Heart right ventricle (tissue), 16 donors: ENCODE measurements at regions of chr20 and their contacts with region 1.

Region 1: GRCh38 chr20:22691369-22692118 is 107.2 kb upstream of the FOXA2 start:
- DNase-seq: peak; percentile 79 to 82
- ATAC-seq: peak; percentile 89 to 96 (median 94)
- H3K4me3 ChIP-seq: peak overlapping the region in 5 of 10 donors; percentile 11 to 33 (median 24)
- H3K27ac ChIP-seq: peak overlapping the region in 9 of 10 donors; percentile 8 to 80 (median 43)
- H3K4me1 ChIP-seq: peaks cover 0 to 32% (median 16%) of the 10 kb centered on the region in 9 donors
- H3K27me3 ChIP-seq: no peaks in the 10 kb centered on the region
- CTCF ChIP-seq: peak; percentile 85 to 95 (median 94)

Region 2: DNA sequence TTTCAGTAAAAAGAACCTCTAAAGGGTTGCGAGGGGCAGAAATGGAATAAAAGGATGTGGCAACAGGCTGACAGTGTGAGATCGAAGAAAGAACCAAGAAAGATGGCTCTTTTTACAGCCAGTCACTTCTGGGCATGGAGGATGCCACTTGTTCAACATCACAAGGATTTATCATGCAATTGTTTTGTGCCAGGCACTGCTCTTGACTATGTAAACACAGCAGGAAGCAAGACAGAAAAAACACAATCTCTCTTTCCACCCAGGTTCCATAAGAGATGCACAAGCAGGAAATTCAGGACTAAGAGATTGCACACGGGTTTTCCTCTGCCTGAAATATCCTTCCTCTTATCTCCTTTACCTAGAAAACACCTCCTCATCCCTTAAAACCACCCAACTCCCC is 145.2 kb before region 1 on chr20:
- intact Hi-C with region 1: no loop called
- DNase-seq: no peak
- ATAC-seq: no peak
- H3K4me3 ChIP-seq: no peak overlapping the region
- H3K27ac ChIP-seq: no peak overlapping the region
- H3K4me1 ChIP-seq: no peaks in the 10 kb centered on the region
- H3K27me3 ChIP-seq: peaks cover 0 to 72% (median 41%) of the 10 kb centered on the region in 7 donors
- CTCF ChIP-seq: no peak

Region 3: DNA sequence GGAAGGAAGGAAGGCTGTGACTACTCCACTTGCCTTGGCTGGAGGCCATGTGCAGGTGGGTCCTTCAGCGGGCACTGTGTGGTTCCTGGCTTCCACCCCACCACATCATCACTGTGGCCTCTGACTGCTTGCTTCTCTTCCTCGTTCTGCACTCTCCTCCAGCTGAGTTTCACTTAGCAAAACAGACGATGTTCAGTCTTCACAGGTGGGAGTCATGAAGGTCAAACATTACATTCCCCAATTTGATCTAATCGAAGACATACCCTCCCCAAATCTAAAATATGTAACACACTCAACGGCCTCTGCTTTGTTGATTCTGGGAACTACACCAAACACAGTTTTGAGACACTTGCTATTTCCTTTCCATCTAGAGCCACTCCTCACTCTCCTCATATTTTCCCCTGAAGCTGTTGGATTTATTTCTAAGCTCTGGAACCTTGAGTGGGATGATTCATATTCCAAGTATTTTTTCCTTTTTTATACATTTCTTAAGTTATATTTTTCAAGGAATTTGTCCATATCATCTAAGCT is 25.3 kb after region 1 on chr20:
- intact Hi-C with region 1: loop called in 1 of 10 experiments (anchors 2 kb)
- DNase-seq: no peak
- ATAC-seq: no peak
- H3K4me3 ChIP-seq: no peak overlapping the region
- H3K27ac ChIP-seq: peak overlapping the region in 8 of 10 donors; percentile 6 to 75 (median 58)
- H3K4me1 ChIP-seq: peaks cover 5 to 48% (median 37%) of the 10 kb centered on the region in 9 donors
- H3K27me3 ChIP-seq: no peaks in the 10 kb centered on the region
- CTCF ChIP-seq: no peak

Region 4: DNA sequence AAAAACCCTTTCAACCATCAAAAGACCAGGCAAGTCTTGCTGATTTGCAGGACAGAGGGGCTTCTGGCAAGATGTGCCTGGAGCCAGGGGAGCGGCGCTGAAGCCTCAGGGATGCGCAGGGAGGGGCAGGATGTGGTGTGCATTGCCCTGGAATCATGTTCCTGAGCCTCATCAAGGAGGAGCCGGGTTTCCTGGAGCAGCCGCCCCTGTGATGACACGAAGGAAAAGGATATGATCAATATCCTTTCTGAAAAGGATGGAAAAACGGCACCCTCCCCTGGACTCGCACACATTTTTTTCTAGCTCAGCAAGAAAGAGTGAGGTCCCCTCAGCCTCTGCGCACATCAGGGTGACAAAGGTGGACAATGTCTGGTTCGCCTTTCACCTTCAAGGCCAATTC is 170.4 kb after region 1 on chr20:
- intact Hi-C with region 1: loop called in 3 of 10 experiments (anchors 5 to 10 kb)
- DNase-seq: peak; percentile 43 to 68
- ATAC-seq: peak; percentile 75 to 93 (median 84)
- H3K4me3 ChIP-seq: no peak overlapping the region
- H3K27ac ChIP-seq: peak overlapping the region in 9 of 10 donors; percentile 39 to 85 (median 71)
- H3K4me1 ChIP-seq: peaks cover 0 to 35% (median 5%) of the 10 kb centered on the region in 9 donors
- H3K27me3 ChIP-seq: peaks cover 0 to 6% (median 0%) of the 10 kb centered on the region in 7 donors
- CTCF ChIP-seq: no peak

Region 5: GRCh38 chr20:23043376-23043775 is 351.8 kb after region 1 on chr20:
- intact Hi-C with region 1: loop called in 8 of 10 experiments (anchors 5 to 10 kb)
- DNase-seq: no peak
- ATAC-seq: no peak
- H3K4me3 ChIP-seq: no peak overlapping the region
- H3K27ac ChIP-seq: no peak overlapping the region
- H3K4me1 ChIP-seq: peaks cover 0 to 40% (median 34%) of the 10 kb centered on the region in 9 donors
- H3K27me3 ChIP-seq: peaks cover 0 to 66% (median 34%) of the 10 kb centered on the region in 7 donors
- CTCF ChIP-seq: no peak

Region 6: GRCh38 chr20:23245553-23246181 is 554.1 kb after region 1 on chr20:
- intact Hi-C with region 1: loop called in 2 of 10 experiments (anchors 5 to 10 kb)
- DNase-seq: peak; percentile 70 to 73
- ATAC-seq: peak; percentile 64 to 85 (median 79)
- H3K4me3 ChIP-seq: no peak overlapping the region
- H3K27ac ChIP-seq: peak overlapping the region in 7 of 10 donors; percentile 39 to 77 (median 70)
- H3K4me1 ChIP-seq: peaks cover 0 to 31% (median 22%) of the 10 kb centered on the region in 9 donors
- H3K27me3 ChIP-seq: peaks cover 0 to 13% (median 0%) of the 10 kb centered on the region in 7 donors
- CTCF ChIP-seq: peak; percentile 20 to 70 (median 63)

Region 7: GRCh38 chr20:23441850-23442313 is 750.3 kb after region 1 on chr20:
- intact Hi-C with region 1: loop called in 2 of 10 experiments (anchors 5 kb)
- DNase-seq: peak; percentile 31 to 72
- ATAC-seq: peak; percentile 59 to 82 (median 75)
- H3K4me3 ChIP-seq: no peak overlapping the region
- H3K27ac ChIP-seq: no peak overlapping the region
- H3K4me1 ChIP-seq: peaks cover 0 to 3% (median 0%) of the 10 kb centered on the region in 9 donors
- H3K27me3 ChIP-seq: no peaks in the 10 kb centered on the region
- CTCF ChIP-seq: peak; percentile 70 to 92 (median 86)